PC-9 (cell line): ENCODE measurements at regions of chr5 and their contacts with region 1.

Region 1: DNA sequence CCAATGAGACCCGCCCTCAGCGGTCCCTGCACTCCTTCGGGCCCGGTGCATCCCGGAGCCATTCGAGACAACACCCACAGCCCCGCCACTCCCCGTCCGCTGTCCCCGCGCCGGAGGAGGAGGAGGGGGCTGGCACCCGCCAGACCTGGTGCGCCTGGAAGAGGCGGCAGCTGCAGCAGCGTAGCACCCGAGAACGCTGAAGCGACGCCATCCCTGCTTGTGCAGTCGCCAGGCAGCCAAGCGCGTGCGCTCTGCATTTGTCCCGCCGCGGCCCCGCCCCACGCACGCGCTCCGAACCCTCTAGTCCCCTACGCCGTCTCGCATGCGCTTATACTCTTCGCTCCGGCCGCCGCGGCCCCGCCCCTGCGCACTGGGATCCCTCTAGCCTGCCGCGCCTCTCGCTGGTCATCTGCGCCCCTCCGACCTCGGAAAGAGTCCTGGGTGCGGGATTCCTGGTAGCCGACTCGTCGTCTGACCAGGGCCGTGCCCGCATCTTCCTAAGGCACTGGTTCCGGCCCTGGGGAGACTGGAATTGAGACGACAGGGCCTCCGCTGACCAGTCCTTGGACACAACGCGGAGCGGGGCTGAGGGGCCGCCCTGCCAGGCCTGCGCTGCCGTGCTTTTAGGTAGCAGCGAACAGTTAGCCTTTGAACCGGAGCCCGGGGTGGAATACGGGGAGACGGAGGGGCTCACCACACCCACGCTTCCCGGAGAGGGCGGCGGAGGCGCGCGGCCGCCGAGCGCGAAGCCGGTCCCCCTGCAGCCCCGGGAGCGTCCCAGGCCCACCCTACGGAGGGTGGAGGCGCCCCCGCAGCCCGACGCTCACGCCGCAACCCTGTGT is at the start of gene MRNIP:
- DNase-seq: peak; percentile 85 to 98
- H3K4me3 ChIP-seq: peak within 1 kb of the TSS; percentile 83
- H3K27ac ChIP-seq: peak within 1 kb of the TSS; percentile 43; the same call in 1 of the 2 replicates
- H3K4me1 ChIP-seq: peaks cover 6% of the 10 kb centered on the region; the same call in 1 of the 2 replicates
- H3K27me3 ChIP-seq: no peaks in the 10 kb centered on the region
- CTCF ChIP-seq: no peak
- total RNA-seq, gene MRNIP: 39.9 and 54.0 TPM in 2 replicates

Region 2: GRCh38 chr5:178535299-178536175 is 1323.3 kb before region 1 on chr5:
- CTCF ChIA-PET with region 1: no interaction called
- POLR2A ChIA-PET with region 1: no interaction called
- intact Hi-C with region 1: no loop called
- DNase-seq: no peak
- H3K4me3 ChIP-seq: no peak overlapping the region
- H3K27ac ChIP-seq: no peak overlapping the region
- H3K4me1 ChIP-seq: no peaks in the 10 kb centered on the region
- H3K27me3 ChIP-seq: peaks cover 96% of the 10 kb centered on the region
- CTCF ChIP-seq: no peak

Region 3: GRCh38 chr5:179914032-179914755 is 55.4 kb after region 1 on chr5:
- CTCF ChIA-PET with region 1: no interaction called
- POLR2A ChIA-PET with region 1: no interaction called
- intact Hi-C with region 1: no loop called
- DNase-seq: peak; percentile 78 to 98
- H3K4me3 ChIP-seq: peak overlapping the region; percentile 35; the same call in 1 of the 2 replicates
- H3K27ac ChIP-seq: peak overlapping the region; percentile 87
- H3K4me1 ChIP-seq: peaks cover 21% of the 10 kb centered on the region
- H3K27me3 ChIP-seq: no peaks in the 10 kb centered on the region
- CTCF ChIP-seq: no peak

Region 4: GRCh38 chr5:180084688-180085561 is 226.1 kb after region 1 on chr5:
- CTCF ChIA-PET with region 1: no interaction called
- POLR2A ChIA-PET with region 1: no interaction called
- intact Hi-C with region 1: loop called (anchors 5 kb)
- DNase-seq: peak; percentile 79 to 82
- H3K4me3 ChIP-seq: peak overlapping the region; percentile 21; the same call in 1 of the 2 replicates
- H3K27ac ChIP-seq: 0 out of 2 replicates have a peak overlapping the region, but pooled peaks have one; percentile 25
- H3K4me1 ChIP-seq: peaks cover 19% of the 10 kb centered on the region
- H3K27me3 ChIP-seq: peaks cover 18% of the 10 kb centered on the region; the same call in 1 of the 2 replicates
- CTCF ChIP-seq: no peak